HEK293T (cell line): ENCODE measurements at regions of chr1 and their contacts with region 1.

Region 1: GRCh38 chr1:204746838-204747442 is 61.4 kb upstream of the LRRN2 start:
- DNase-seq: peak; percentile 77

Region 2: DNA sequence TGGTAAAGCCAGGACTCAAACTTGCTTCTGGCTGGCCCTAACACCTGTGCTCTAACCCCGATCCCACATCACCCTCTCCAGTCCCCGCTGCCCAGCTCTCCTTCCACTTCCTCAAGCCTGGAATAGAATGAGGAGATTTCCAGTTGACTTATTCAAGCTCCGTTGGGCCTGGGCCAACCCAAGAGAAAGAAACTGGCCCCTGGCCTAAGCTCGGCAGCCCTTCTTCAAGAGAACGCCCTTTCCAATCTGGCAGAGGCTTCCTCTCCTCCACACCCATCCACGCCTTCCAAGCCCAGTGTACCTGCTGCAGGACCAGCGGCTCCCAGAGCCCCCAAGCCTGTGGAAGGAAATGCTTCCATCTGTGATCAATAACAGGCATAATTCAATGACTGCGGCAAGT is 113.3 kb before region 1 on chr1:
- CTCF ChIA-PET with region 1: no interaction called
- POLR2A ChIA-PET with region 1: no interaction called
- DNase-seq: no peak

Region 3: GRCh38 chr1:204692325-204692840 is 54.6 kb before region 1 on chr1:
- CTCF ChIA-PET with region 1: no interaction called
- POLR2A ChIA-PET with region 1: no interaction called
- DNase-seq: no peak

Region 4: DNA sequence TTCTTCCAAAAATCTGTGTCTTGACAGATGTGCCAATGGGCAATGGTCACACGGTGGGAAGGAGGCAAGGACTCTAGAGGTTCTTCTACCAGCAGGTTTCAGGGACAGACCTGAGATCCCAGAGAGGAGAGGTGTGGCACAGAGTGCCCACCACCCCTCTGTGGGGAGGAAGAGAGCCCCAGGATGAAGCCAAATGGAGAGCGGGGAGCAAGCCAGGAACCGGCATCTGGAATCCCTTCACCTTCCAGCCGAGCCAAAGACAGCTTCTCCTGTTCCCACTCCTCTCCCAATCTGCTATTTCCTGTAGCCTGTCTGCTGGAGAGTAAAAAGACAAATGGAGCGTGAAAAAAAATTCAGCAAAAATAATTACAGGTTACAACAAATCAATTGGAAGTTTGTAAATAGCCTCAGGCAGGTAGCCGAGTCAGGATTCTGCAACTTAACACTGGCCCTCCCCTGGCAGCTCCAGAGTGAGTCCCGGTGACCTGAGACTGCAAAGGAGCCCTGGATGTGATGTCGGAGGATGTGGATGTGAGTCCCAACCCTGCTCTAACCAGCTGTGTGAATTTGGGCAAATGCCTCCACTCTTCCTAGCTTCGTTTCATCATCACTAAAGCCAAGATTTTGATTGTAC is 16.0 kb before region 1 on chr1:
- CTCF ChIA-PET with region 1: interaction called, 10 read pairs
- POLR2A ChIA-PET with region 1: no interaction called
- DNase-seq: no peak

Region 5: DNA sequence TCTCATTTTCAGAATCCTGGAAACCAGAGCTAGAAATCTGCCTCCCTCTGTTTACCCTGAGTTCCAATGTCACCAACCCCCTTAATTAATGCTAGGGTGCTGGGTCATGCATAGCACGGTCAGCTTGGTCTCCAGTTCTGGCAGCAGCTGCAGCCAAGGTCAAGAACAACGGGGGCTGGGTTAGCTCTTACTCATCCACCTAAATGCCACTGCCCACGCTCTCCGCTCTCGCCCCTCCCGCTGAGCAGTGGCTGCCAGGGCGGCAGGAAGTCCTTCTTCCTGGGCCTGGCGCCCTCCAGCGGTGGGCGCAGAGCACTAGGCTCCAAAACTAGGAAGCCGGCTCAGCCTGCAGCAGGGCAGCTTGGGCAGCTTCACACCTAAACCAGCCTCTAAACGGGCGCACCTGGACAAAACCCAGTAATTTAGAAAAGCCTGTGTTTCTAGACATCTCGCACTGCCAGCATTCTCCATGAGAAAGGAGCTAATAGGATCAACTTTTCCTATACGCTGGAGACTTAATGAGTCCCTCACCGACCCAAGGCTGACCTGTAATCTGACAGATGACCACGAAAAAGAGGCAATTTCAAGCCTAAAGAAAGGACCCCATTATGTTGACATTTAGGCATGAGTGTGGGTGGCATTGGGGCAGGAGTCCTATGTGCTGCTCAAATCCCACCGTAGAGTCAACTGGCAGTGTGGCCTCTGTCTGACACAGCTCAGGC is 16.9 kb after region 1 on chr1:
- CTCF ChIA-PET with region 1: interaction called, 17 read pairs
- POLR2A ChIA-PET with region 1: no interaction called
- DNase-seq: peak; percentile 90